Activated CD4-positive, alpha-beta T cell treated with anti-CD3 and anti-CD28 coated beads for 36 hours (primary cell): ENCODE measurements at regions of chrX and their contacts with region 1.

Region 1: GRCh38 chrX:76172325-76172893 is 453 bp upstream of the PBDC1 start:
- DNase-seq: no peak
- ATAC-seq: peak; percentile 70
- H3K4me3 Mint-ChIP-seq: peak overlapping the region; percentile 87
- H3K27ac Mint-ChIP-seq: peak overlapping the region; percentile 97
- H3K4me1 Mint-ChIP-seq: peaks cover 49% of the 10 kb centered on the region
- H3K27me3 Mint-ChIP-seq: no peaks in the 10 kb centered on the region

Region 2: DNA sequence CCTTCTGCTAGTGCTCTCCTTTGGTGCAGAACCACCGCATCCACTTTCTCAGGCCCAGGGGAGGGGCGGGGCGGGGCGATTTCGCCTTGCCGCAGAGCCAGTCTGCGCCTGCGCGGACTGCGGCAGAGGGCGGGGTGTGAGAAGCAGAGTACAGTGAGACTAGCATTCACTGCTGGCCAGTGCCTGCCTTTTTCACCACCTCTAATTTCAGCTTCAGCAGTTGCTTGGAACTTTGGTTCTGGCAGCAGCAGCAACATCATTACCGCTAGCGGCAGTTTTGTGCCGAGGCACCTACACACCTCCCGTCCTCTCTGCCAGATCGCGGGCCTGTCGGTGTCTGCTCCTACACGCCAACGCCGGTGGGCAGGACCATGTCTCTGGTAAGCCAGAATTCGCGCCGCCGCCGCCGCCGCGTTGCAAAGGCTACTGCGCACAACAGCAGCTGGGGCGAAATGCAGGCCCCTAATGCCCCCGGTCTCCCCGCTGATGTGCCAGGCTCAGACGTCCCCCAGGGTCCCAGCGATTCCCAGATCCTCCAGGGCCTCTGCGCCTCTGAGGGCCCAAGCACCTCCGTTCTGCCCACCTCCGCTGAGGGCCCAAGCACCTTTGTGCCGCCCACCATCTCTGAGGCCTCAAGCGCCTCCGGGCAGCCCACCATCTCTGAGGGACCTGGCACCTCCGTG is 255.3 kb after region 1 on chrX and contains the start of gene MAGEE1:
- CTCF ChIA-PET with region 1: no interaction called
- POLR2A ChIA-PET with region 1: no interaction called
- intact Hi-C with region 1: loop called in 1 of 2 experiments (anchors 2 kb)
- DNase-seq: peak; percentile 86
- ATAC-seq: peak; percentile 83
- H3K4me3 Mint-ChIP-seq: peak within 1 kb of the TSS; percentile 79
- H3K27ac Mint-ChIP-seq: peak within 1 kb of the TSS; percentile 76
- H3K4me1 Mint-ChIP-seq: peaks cover 32% of the 10 kb centered on the region
- H3K27me3 Mint-ChIP-seq: no peaks in the 10 kb centered on the region
- total RNA-seq, gene MAGEE1: 3.8 to 4.0 TPM

Region 3: GRCh38 chrX:77910108-77910840 is 1737.9 kb after region 1 on chrX and contains the start of gene ATP7A:
- CTCF ChIA-PET with region 1: no interaction called
- POLR2A ChIA-PET with region 1: no interaction called
- intact Hi-C with region 1: loop called in 1 of 2 experiments (anchors 5 kb)
- DNase-seq: peak; percentile 94
- ATAC-seq: peak; percentile 94
- H3K4me3 Mint-ChIP-seq: peak within 1 kb of the TSS; percentile 85
- H3K27ac Mint-ChIP-seq: peak within 1 kb of the TSS; percentile 99
- H3K4me1 Mint-ChIP-seq: peaks cover 13% of the 10 kb centered on the region
- H3K27me3 Mint-ChIP-seq: no peaks in the 10 kb centered on the region
- total RNA-seq, gene ATP7A: 9.5 to 9.7 TPM